ENCODE measurements at regions of chr11 and their contacts with region 1.

Region 1: GRCh38 chr11:3797329-3798095 is at the start of gene NUP98:
- DNase-seq: peak; percentile 96 to 100 (median 100)
- ATAC-seq: peak; percentile 95
- H3K4me3 ChIP-seq: peak within 1 kb of the TSS; percentile 96
- H3K4me3 Mint-ChIP-seq: peak within 1 kb of the TSS; percentile 87 to 98 (median 96)
- H3K27ac ChIP-seq: peak within 1 kb of the TSS; percentile 99
- H3K27ac Mint-ChIP-seq: peak within 1 kb of the TSS; percentile 98 to 100 (median 99)
- H3K4me1 ChIP-seq: peaks cover 25 to 27% of the 10 kb centered on the region in 2 donors
- H3K4me1 Mint-ChIP-seq: peaks cover 11 to 61% (median 51%) of the 10 kb centered on the region in 7 donors
- H3K27me3 ChIP-seq: no peaks in the 10 kb centered on the region
- H3K27me3 Mint-ChIP-seq: peaks cover 0 to 2% (median 0%) of the 10 kb centered on the region in 5 donors
- total RNA-seq, gene NUP98: 103 to 137 (median 120) TPM

Region 2: GRCh38 chr11:3378426-3379423 is 418.8 kb before region 1 on chr11 and contains the start of gene ZNF195:
- CTCF ChIA-PET with region 1: no interaction called
- POLR2A ChIA-PET with region 1: no interaction called
- intact Hi-C with region 1: loop called in 1 of 2 experiments (anchors 5 kb)
- DNase-seq: peak; percentile 91 to 97 (median 95)
- ATAC-seq: peak; percentile 100
- H3K4me3 ChIP-seq: peak within 1 kb of the TSS; percentile 96
- H3K4me3 Mint-ChIP-seq: peak within 1 kb of the TSS; percentile 95 to 100 (median 98)
- H3K27ac ChIP-seq: peak within 1 kb of the TSS; percentile 90
- H3K27ac Mint-ChIP-seq: peak within 1 kb of the TSS; percentile 93 to 98 (median 98)
- H3K4me1 ChIP-seq: peaks cover 17 to 23% of the 10 kb centered on the region in 2 donors
- H3K4me1 Mint-ChIP-seq: peaks cover 30 to 67% (median 61%) of the 10 kb centered on the region in 7 donors
- H3K27me3 ChIP-seq: no peaks in the 10 kb centered on the region
- H3K27me3 Mint-ChIP-seq: no peaks in the 10 kb centered on the region
- total RNA-seq, gene ZNF195: 18.4 to 39.0 (median 33.7) TPM

Region 3: GRCh38 chr11:3807909-3808860 is 10.7 kb after region 1 on chr11 and contains the start of gene PGAP2:
- CTCF ChIA-PET with region 1: interaction called, 5 read pairs
- POLR2A ChIA-PET with region 1: interaction called, 31 read pairs
- intact Hi-C with region 1: loop called (anchors 1 kb)
- DNase-seq: peak; percentile 37 to 75 (median 52)
- ATAC-seq: peak; percentile 83
- H3K4me3 ChIP-seq: peak within 1 kb of the TSS; percentile 66
- H3K4me3 Mint-ChIP-seq: peak within 1 kb of the TSS; percentile 90 to 99 (median 96)
- H3K27ac ChIP-seq: peak within 1 kb of the TSS; percentile 78
- H3K27ac Mint-ChIP-seq: peak within 1 kb of the TSS; percentile 77 to 97 (median 93)
- H3K4me1 ChIP-seq: peaks cover 3 to 12% of the 10 kb centered on the region in 2 donors
- H3K4me1 Mint-ChIP-seq: peaks cover 12 to 27% (median 18%) of the 10 kb centered on the region in 7 donors
- H3K27me3 ChIP-seq: no peaks in the 10 kb centered on the region
- H3K27me3 Mint-ChIP-seq: no peaks in the 10 kb centered on the region
- total RNA-seq, gene PGAP2: 20.8 to 28.3 (median 26.1) TPM

Region 4: GRCh38 chr11:3841426-3842350 is 44.2 kb after region 1 on chr11:
- CTCF ChIA-PET with region 1: interaction called, 4 read pairs
- POLR2A ChIA-PET with region 1: interaction called, 38 read pairs
- intact Hi-C with region 1: loop called (anchors 1 kb)
- DNase-seq: peak; percentile 82 to 98 (median 95)
- ATAC-seq: peak; percentile 84
- H3K4me3 ChIP-seq: peak overlapping the region; percentile 51
- H3K4me3 Mint-ChIP-seq: peak overlapping the region; percentile 76 to 99 (median 91)
- H3K27ac ChIP-seq: peak overlapping the region; percentile 95
- H3K27ac Mint-ChIP-seq: peak overlapping the region; percentile 87 to 99 (median 97)
- H3K4me1 ChIP-seq: peaks cover 30 to 34% of the 10 kb centered on the region in 2 donors
- H3K4me1 Mint-ChIP-seq: peaks cover 19 to 64% (median 54%) of the 10 kb centered on the region in 7 donors
- H3K27me3 ChIP-seq: no peaks in the 10 kb centered on the region
- H3K27me3 Mint-ChIP-seq: no peaks in the 10 kb centered on the region

Region 5: GRCh38 chr11:3939211-3939610 is 141.7 kb after region 1 on chr11:
- CTCF ChIA-PET with region 1: no interaction called
- POLR2A ChIA-PET with region 1: no interaction called
- intact Hi-C with region 1: no loop called
- DNase-seq: no peak
- ATAC-seq: no peak
- H3K4me3 ChIP-seq: no peak overlapping the region
- H3K4me3 Mint-ChIP-seq: peak overlapping the region in 1 of 10 donors; percentile 26
- H3K27ac ChIP-seq: no peak overlapping the region
- H3K27ac Mint-ChIP-seq: peak overlapping the region in 8 of 9 donors; percentile 44 to 95 (median 76)
- H3K4me1 ChIP-seq: peaks cover 26 to 49% of the 10 kb centered on the region in 2 donors
- H3K4me1 Mint-ChIP-seq: peaks cover 56 to 92% (median 84%) of the 10 kb centered on the region in 7 donors
- H3K27me3 ChIP-seq: no peaks in the 10 kb centered on the region
- H3K27me3 Mint-ChIP-seq: no peaks in the 10 kb centered on the region

Region 6: DNA sequence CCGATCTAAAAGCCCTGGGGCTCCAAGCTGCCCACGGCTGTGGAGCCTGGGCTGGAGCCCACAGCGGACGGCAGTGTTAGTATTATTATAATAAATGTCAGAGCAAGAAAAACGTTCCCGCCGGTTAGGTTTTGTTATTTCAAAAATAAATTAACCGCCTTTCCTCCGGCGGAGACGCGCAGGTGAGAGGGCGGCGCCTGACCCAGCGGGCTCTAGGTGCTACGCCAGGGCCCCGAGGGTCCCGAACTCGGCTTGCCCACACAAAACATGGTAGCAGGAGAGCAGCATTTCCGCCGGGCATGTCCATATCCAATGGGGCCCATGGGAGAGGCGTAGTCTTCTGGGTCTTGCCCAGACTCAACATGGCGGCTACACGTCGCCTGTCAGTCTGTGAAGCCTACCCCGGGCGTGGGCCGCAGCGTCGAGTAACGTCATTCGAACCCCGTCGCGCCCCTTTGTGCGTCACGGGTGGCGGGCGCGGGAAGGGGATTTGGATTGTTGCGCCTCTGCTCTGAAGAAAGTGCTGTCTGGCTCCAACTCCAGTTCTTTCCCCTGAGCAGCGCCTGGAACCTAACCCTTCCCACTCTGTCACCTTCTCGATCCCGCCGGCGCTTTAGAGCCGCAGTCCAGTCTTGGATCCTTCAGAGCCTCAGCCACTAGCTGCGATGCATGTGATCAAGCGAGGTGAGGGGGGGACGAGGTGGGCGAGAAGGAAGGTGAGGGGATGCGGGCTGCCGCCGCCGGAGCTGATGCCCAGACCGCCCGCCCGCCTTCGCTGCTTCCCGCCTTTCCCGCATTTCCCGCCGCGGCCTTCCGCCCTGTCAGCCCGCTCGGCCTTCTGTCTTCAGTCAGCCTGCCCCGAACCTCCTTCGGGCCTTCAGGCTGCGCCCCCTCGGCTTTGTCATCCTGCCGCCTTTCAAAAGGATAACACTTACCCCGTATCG is 297.1 kb after region 1 on chr11 and contains the start of gene RRM1:
- CTCF ChIA-PET with region 1: no interaction called
- POLR2A ChIA-PET with region 1: no interaction called
- intact Hi-C with region 1: loop called (anchors 1 kb)
- DNase-seq: peak; percentile 88 to 96 (median 94)
- ATAC-seq: peak; percentile 95
- H3K4me3 ChIP-seq: peak within 1 kb of the TSS; percentile 83
- H3K4me3 Mint-ChIP-seq: peak within 1 kb of the TSS; percentile 92 to 99 (median 97)
- H3K27ac ChIP-seq: peak within 1 kb of the TSS; percentile 97
- H3K27ac Mint-ChIP-seq: peak within 1 kb of the TSS; percentile 94 to 99 (median 98)
- H3K4me1 ChIP-seq: peaks cover 46 to 63% of the 10 kb centered on the region in 2 donors
- H3K4me1 Mint-ChIP-seq: peaks cover 63 to 90% (median 84%) of the 10 kb centered on the region in 7 donors
- H3K27me3 ChIP-seq: no peaks in the 10 kb centered on the region
- H3K27me3 Mint-ChIP-seq: no peaks in the 10 kb centered on the region
- total RNA-seq, gene RRM1: 33.6 to 140 (median 40.3) TPM